ENCODE measurements at regions of chr16 and their contacts with region 1.

Region 1: DNA sequence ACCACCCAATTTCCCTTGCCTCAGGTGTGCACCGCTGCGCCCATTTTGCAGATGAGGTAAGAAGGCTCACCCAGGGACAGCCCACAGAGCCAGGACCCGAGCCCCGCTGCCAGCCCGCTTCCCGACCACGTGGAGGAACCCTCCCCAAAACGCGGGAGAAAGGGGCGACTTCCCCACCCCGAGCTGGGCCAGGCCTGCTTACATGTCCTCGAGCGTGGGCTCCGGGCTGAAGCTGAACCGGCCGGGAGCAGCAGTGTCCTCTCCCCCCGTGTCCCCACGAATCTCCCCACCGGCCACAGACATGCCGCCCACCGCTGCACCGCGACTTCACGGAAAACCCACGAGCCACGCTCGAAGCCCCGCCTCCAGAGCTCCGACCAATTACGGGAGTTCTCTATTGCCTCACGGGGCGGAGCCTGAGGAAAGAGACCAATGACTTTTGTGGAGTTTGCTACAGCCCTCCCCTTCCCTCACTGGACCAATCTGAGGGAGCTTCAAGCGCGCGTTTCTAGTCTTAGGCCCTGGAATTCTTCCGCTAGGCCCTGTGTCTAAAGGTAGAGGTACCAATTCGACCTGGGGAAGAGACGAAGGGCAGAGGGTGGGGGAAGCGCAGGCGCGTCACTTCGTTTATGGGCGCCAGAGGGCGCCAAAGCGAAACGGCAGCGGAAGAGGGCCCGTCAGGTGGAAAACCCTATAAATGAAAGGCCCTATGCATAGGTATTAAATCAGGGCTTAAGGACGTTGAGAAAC is at the start of gene DCTPP1:
- DNase-seq: peak; percentile 98
- H3K4me3 ChIP-seq: peak within 1 kb of the TSS; percentile 74
- H3K27ac ChIP-seq: no peak within 1 kb of the TSS
- H3K27me3 ChIP-seq: no peaks in the 10 kb centered on the region
- CTCF ChIP-seq: peak; percentile 85

Region 2: GRCh38 chr16:30609926-30610839 is 180.3 kb after region 1 on chr16 and contains the start of gene ZNF689:
- in situ Hi-C with region 1: loop called (anchors 25 kb)
- DNase-seq: peak; percentile 93
- H3K4me3 ChIP-seq: peak within 1 kb of the TSS; percentile 83
- H3K27ac ChIP-seq: peak within 1 kb of the TSS; percentile 86
- H3K27me3 ChIP-seq: no peaks in the 10 kb centered on the region
- CTCF ChIP-seq: no peak

Region 3: DNA sequence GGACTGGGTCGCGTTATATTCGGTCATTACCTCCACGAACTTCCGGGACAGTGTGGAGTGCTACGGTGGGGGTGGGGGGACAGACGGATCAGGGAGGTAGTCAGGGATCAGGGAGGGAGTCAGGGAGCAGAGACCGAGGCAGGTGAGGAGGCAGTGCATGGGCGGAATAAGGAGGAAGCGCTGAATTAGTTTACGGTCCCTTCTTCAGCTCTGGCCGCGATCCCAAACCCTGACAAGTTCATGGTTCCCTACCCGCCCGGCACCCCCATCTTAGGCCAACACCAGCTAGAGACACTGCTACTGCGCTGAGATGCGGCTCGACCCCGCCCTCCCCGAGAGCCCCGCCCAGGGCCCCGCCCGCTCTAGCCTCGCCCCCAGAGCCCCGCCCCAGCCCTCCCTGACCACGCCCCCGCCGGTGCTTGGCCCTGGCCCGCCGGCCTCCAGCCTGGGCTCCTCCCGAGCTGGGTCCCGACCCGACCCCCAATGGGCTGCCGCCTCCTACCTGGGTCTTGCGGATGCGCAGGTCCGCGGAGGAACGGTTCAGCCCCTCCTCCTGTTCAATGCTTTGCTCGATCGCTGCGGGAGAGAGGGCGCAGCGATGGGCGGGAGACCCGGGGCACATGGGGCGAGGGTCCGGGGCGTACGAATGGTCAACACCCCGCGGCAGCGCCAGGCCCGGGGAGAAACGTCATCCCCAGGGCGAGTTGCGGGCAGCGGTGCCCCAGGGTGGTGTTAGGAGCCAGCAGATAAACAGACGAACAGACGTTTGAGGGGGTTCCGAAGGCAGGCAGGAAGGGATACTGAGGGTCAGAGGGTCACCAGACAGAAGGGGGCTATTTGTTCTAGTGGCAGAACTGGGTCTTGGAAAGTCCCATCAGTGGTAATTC is 567.4 kb after region 1 on chr16:
- in situ Hi-C with region 1: no loop called
- DNase-seq: peak; percentile 64
- H3K4me3 ChIP-seq: peak overlapping the region; percentile 58
- H3K27ac ChIP-seq: peak overlapping the region; percentile 66
- H3K27me3 ChIP-seq: no peaks in the 10 kb centered on the region
- CTCF ChIP-seq: no peak

Measured in brain microvascular endothelial cell (primary cell).